ENCODE measurements at regions of chr11 and their contacts with region 1.

Region 1: DNA sequence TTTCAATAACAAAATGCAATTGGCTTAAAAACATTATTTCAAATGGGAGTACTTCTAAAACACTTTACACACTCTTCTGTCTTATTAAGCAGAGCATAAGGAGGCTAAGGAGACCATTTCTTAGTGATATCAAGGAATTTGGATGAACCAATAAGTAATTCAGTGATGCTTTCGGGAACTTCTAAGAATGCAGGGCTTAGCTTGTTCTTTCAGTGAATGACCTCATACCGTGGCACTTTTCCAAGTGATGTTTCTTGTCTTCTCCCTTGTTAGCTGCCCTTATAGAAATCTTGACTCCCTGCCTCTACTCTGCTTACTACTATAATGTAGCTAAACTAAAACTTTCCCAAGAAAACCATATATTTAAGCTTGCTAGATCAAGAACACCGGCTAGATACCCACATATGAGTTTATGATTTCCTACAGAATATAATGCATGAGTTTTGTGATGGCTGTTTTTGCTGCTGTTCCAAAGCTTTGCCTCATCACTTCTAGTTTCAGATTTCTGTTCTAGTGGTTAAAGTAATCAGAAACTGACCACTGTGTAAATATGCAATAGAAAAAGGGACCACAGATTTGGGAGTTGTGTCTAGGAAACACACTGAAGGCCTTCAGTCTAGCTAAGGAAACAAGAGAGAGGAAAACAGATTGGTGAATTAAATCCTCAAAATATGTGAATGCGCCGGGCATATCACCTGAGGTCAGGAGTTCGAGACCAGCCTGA is 37.5 kb upstream of the STK33 start:
- DNase-seq: no peak
- H3K4me3 Mint-ChIP-seq: no peak overlapping the region
- H3K27ac Mint-ChIP-seq: no peak overlapping the region
- H3K4me1 Mint-ChIP-seq: no peaks in the 10 kb centered on the region
- H3K27me3 Mint-ChIP-seq: no peaks in the 10 kb centered on the region

Region 2: DNA sequence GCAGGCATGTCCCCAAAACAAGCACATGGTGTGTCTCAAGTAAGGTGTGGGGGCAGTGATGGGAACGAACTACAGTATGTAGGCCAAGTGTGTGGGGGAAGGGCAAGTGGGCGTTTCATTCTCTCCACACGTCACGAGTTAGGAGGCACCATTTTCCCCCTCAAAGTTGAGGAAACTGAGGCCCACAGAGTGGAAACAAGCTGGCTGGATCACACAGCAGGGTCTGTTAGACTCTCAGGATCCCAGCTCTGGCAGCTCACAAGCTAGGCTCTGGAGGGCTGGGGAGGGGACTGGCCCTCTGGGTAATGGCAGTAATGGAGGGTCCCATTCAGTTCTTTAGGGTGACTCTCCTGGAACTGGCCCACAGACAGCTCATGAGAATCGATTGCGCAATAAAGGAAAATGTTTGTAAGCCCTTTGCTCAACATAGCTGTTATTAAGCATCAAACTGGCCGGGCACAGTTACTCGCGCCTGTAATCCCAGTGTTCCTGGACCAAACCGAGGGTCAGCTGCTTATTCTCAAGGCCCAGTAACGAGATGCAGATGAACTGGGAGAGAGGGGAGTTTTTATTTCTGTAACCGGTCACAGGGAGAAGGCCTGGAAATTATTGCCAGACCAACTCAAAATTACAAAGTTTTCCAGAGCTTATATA is 574.6 kb before region 1 on chr11:
- CTCF ChIA-PET with region 1: no interaction called
- POLR2A ChIA-PET with region 1: interaction called, 11 read pairs
- DNase-seq: no peak
- H3K4me3 Mint-ChIP-seq: no peak overlapping the region
- H3K27ac Mint-ChIP-seq: no peak overlapping the region
- H3K4me1 Mint-ChIP-seq: peaks cover 2% of the 10 kb centered on the region
- H3K27me3 Mint-ChIP-seq: peaks cover 1% of the 10 kb centered on the region

Region 3: GRCh38 chr11:8566613-8567210 is 64.8 kb before region 1 on chr11:
- CTCF ChIA-PET with region 1: no interaction called
- POLR2A ChIA-PET with region 1: no interaction called
- DNase-seq: no peak
- H3K4me3 Mint-ChIP-seq: no peak overlapping the region
- H3K27ac Mint-ChIP-seq: no peak overlapping the region
- H3K4me1 Mint-ChIP-seq: no peaks in the 10 kb centered on the region
- H3K27me3 Mint-ChIP-seq: peaks cover 37% of the 10 kb centered on the region

Measured in activated CD4-positive, alpha-beta T cell treated with anti-CD3 and anti-CD28 coated beads, Interleukin-2, amount 10 ng/mL, durations not matched to agents 7 days and 5 days (primary cell).